A549 (cell line): ENCODE measurements at regions of chr3 and their contacts with region 1.

Region 1: DNA sequence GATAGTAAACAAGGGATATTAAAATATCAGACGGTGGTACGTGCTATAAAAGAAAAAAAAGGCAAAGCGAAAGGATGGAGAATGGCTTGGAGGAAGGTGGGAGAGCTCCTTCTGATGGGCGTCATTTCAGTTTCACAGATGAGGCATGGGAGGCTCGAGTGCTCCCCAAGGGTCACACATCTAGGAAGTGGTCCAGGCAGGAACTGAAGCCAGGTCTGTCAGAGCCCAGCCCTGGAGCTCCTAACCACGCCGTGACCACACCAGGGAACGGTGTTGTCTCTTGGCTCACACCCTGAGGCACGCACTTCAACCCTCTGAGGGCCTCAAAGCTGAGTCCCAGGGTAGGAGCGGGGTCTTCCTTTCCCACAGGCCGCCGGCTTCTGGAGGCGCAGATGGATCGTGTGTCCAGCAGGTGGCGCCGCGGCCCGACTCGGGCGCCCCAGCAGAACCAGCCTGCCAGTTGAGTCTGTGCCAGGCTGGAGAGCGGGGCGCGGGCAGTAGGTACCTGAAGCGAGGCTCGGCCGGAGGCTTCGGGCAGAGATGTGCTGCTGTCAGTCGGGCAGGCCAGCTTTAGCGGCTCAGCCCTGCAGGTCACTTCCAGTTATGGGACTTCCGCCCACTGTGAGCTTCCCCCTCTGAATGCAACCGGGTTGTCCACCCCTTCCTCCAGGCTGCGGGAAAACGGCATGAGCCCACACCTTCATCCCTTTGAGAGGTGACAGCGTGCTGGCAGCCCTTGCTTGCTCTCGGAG is 68.1 kb downstream of the SLC6A1 start:
- DNase-seq: peak; percentile 71 to 75
- ATAC-seq: peak; percentile 87 to 93
- H3K4me3 ChIP-seq: peak overlapping the region; percentile 42
- H3K27ac ChIP-seq: peak overlapping the region; percentile 45 to 78
- H3K4me1 ChIP-seq: peaks cover 8% of the 10 kb centered on the region; the same call in 1 of the 3 replicates
- CTCF ChIP-seq: peak; percentile 94
- EP300 ChIP-seq: no peak
- POLR2A ChIP-seq: no peak
- RAD21 ChIP-seq: peak; percentile 79 to 90

Region 2: GRCh38 chr3:10917176-10917575 is 143.5 kb before region 1 on chr3:
- CTCF ChIA-PET with region 1: interaction called, 17 read pairs
- POLR2A ChIA-PET with region 1: no interaction called
- DNase-seq: no peak
- ATAC-seq: peak; percentile 32 to 40; a peak in 2 of 6 replicates
- H3K4me3 ChIP-seq: no peak overlapping the region
- H3K27ac ChIP-seq: no peak overlapping the region
- H3K4me1 ChIP-seq: no peaks in the 10 kb centered on the region
- CTCF ChIP-seq: no peak
- EP300 ChIP-seq: no peak
- POLR2A ChIP-seq: no peak
- RAD21 ChIP-seq: no peak

Region 3: GRCh38 chr3:10977892-10978510 is 82.7 kb before region 1 on chr3:
- CTCF ChIA-PET with region 1: interaction called, 31 read pairs
- POLR2A ChIA-PET with region 1: no interaction called
- DNase-seq: no peak
- ATAC-seq: no peak
- H3K4me3 ChIP-seq: no peak overlapping the region
- H3K27ac ChIP-seq: no peak overlapping the region
- H3K4me1 ChIP-seq: peaks cover 2% of the 10 kb centered on the region; the same call in 2 of the 3 replicates
- CTCF ChIP-seq: no peak
- EP300 ChIP-seq: no peak
- POLR2A ChIP-seq: no peak
- RAD21 ChIP-seq: no peak

Region 4: GRCh38 chr3:11037241-11037873 is 23.3 kb before region 1 on chr3:
- CTCF ChIA-PET with region 1: interaction called, 26 read pairs
- POLR2A ChIA-PET with region 1: no interaction called
- DNase-seq: no peak
- ATAC-seq: no peak
- H3K4me3 ChIP-seq: no peak overlapping the region
- H3K27ac ChIP-seq: no peak overlapping the region
- H3K4me1 ChIP-seq: no peaks in the 10 kb centered on the region
- CTCF ChIP-seq: no peak
- EP300 ChIP-seq: no peak
- POLR2A ChIP-seq: no peak
- RAD21 ChIP-seq: no peak

Region 5: GRCh38 chr3:11091088-11091590 is 30.5 kb after region 1 on chr3:
- CTCF ChIA-PET with region 1: interaction called, 56 read pairs
- POLR2A ChIA-PET with region 1: no interaction called
- DNase-seq: no peak
- ATAC-seq: no peak
- H3K4me3 ChIP-seq: no peak overlapping the region
- H3K27ac ChIP-seq: peak overlapping the region in 1 of 2 experiments; percentile 3; a peak in 2 of 6 replicates
- H3K4me1 ChIP-seq: peaks cover 8% of the 10 kb centered on the region
- CTCF ChIP-seq: no peak
- EP300 ChIP-seq: no peak
- POLR2A ChIP-seq: no peak
- RAD21 ChIP-seq: no peak

Region 6: DNA sequence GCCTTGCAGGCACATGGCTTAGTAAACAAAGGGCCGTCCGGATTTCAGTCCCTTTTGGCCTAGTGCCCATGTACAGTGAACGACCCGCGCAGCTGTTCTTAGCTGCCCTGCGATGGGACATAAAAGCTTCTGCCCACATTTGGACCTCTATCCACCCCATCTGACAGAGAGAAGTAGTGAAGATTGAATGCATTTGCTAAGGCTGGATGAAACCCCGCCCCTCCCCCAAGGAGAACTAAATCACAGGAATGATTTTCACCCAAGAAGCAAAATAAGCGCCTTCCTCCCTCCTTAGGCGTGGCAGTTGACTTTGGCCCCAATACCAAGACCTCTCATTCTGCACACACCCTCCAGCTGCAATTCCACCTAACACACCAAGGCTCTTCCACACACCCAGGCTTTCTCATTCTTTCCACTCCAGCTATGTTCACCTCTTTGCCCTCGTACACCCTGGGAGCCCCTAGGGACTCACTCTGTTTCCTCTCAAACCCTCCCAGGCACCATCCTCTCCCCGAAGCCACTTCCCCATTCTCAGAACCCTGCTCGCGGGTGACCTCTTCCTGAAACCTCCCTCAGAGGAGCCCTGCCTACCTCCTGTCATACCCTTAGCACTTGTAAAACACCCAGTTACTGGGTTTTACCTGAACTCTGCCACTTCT is 79.5 kb after region 1 on chr3:
- CTCF ChIA-PET with region 1: interaction called, 22 read pairs
- POLR2A ChIA-PET with region 1: interaction called, 6 read pairs
- DNase-seq: peak in 1 of 2 experiments; percentile 62
- ATAC-seq: no peak
- H3K4me3 ChIP-seq: no peak overlapping the region
- H3K27ac ChIP-seq: peak overlapping the region; percentile 16 to 66; a peak in 5 of 6 replicates
- H3K4me1 ChIP-seq: peaks cover 29% of the 10 kb centered on the region
- CTCF ChIP-seq: no peak
- EP300 ChIP-seq: no peak
- POLR2A ChIP-seq: no peak
- RAD21 ChIP-seq: no peak

Region 7: GRCh38 chr3:11335056-11335608 is 274.5 kb after region 1 on chr3:
- CTCF ChIA-PET with region 1: interaction called, 82 read pairs
- POLR2A ChIA-PET with region 1: no interaction called
- DNase-seq: peak; percentile 55 to 66
- ATAC-seq: peak; percentile 93 to 94
- H3K4me3 ChIP-seq: no peak overlapping the region
- H3K27ac ChIP-seq: 0 out of 6 replicates have a peak overlapping the region, but pooled peaks of 1 of the 2 experiments have one; percentile 7
- H3K4me1 ChIP-seq: no peaks in the 10 kb centered on the region; the same call in 2 of the 3 replicates
- CTCF ChIP-seq: peak; percentile 86
- EP300 ChIP-seq: no peak
- POLR2A ChIP-seq: no peak
- RAD21 ChIP-seq: peak; percentile 80 to 85

Region 8: DNA sequence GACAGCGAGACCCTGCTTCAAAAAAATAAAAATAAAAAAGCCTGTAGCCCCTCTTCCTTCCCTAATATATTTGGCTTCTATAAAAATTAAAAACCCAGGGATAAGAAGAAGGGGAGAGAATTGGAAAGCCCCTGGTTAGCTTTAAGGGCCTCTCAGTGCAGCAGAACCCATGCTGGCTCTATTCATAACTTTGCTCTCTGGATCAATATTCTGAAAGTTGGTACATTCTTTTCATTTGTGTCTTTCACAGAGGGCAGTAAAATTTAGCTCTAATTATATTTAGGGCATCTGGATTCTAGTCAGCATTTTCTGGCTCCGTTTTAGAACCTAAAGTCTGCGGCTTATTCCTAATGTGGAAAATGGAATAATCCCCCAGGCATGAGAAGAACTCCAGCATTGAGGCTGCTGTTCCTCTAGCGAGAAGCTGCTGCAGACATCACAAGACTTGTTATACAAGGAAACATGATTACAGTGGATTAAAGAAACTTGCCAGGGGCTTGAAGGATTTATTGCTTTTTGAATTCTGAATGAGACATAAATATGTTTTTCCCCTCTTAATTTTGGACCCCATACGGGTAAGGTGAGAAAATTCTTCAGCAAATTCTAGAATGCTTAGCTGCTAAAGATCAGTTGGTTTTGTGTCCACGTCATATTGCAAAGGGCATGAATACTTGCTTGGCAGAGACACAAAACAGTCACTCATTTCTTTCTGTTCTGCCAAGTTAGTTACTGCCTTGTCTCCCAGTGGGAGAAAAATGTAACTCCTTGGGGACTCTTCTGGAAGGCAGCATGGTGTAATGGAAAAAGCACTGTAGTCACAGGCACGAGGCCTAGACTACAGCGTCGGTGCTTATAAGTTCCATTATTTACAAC is 405.3 kb after region 1 on chr3:
- CTCF ChIA-PET with region 1: no interaction called
- POLR2A ChIA-PET with region 1: no interaction called
- DNase-seq: no peak
- ATAC-seq: no peak
- H3K4me3 ChIP-seq: no peak overlapping the region
- H3K27ac ChIP-seq: no peak overlapping the region
- H3K4me1 ChIP-seq: no peaks in the 10 kb centered on the region
- CTCF ChIP-seq: no peak
- EP300 ChIP-seq: no peak
- POLR2A ChIP-seq: no peak
- RAD21 ChIP-seq: no peak

Region 9: GRCh38 chr3:11699083-11699427 is 638.4 kb after region 1 on chr3:
- CTCF ChIA-PET with region 1: no interaction called
- POLR2A ChIA-PET with region 1: no interaction called
- DNase-seq: no peak
- ATAC-seq: no peak
- H3K4me3 ChIP-seq: no peak overlapping the region
- H3K27ac ChIP-seq: peak overlapping the region in 1 of 2 experiments; percentile 13; a peak in 2 of 6 replicates
- H3K4me1 ChIP-seq: no peaks in the 10 kb centered on the region
- CTCF ChIP-seq: no peak
- EP300 ChIP-seq: no peak
- POLR2A ChIP-seq: no peak
- RAD21 ChIP-seq: no peak